ENCODE measurements at regions of chr9 and their contacts with region 1.

Region 1: GRCh38 chr9:35111001-35111933 is 4.4 kb downstream of the ATOSB start:
- DNase-seq: peak; percentile 97
- H3K4me3 Mint-ChIP-seq: peak overlapping the region; percentile 56
- H3K27ac Mint-ChIP-seq: peak overlapping the region; percentile 88
- H3K4me1 Mint-ChIP-seq: peaks cover 44% of the 10 kb centered on the region
- H3K27me3 Mint-ChIP-seq: no peaks in the 10 kb centered on the region

Region 2: DNA sequence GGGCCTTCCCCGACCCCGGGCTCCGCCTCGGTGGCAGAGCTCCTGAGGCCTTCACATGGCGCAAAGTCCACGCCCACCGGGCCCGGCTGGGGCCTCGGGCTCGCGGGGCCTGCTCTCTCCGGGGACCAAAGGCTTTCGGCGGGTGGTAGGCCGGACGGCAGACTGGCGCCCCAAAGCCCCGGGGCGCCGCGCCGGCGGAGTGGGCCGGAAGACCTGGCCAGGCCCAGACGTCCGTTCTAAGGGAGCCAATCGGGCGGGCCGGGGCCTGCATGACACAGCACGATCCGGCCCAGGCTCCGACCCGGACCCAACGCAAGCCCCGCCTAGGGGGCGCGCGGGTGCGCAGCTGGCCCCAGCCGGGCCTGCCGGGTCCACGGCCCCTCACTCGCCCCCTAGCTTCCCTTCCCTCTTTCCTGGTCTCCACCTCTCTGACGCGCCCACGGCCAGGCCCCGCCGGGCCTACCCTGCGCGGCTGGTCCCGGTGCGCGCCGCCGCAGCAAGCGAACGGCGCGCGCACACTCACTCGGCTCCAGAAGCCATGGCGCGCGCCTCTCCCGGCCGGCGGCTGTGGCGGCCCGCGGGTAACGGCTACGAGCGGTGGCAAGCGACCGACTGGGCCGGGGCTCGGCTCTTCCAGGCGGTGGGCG is 39.3 kb before region 1 on chr9:
- CTCF ChIA-PET with region 1: interaction called, 4 read pairs
- intact Hi-C with region 1: loop called (anchors 1 kb)
- DNase-seq: peak; percentile 77
- H3K4me3 Mint-ChIP-seq: peak overlapping the region; percentile 92
- H3K27ac Mint-ChIP-seq: peak overlapping the region; percentile 96
- H3K4me1 Mint-ChIP-seq: peaks cover 57% of the 10 kb centered on the region
- H3K27me3 Mint-ChIP-seq: no peaks in the 10 kb centered on the region